Natural killer cell (primary cell): ENCODE measurements at regions of chr7 and their contacts with region 1.

Region 1: GRCh38 chr7:13262929-13263530 is 575.6 kb downstream of the ARL4A start:
- DNase-seq: peak in 1 of 2 donors; percentile 64
- ATAC-seq: no peak
- H3K4me3 ChIP-seq: no peak overlapping the region
- H3K4me3 Mint-ChIP-seq: no peak overlapping the region
- H3K27ac ChIP-seq: no peak overlapping the region
- H3K27ac Mint-ChIP-seq: no peak overlapping the region
- H3K4me1 ChIP-seq: no peaks in the 10 kb centered on the region
- H3K4me1 Mint-ChIP-seq: no peaks in the 10 kb centered on the region
- H3K27me3 ChIP-seq: no peaks in the 10 kb centered on the region
- H3K27me3 Mint-ChIP-seq: no peaks in the 10 kb centered on the region
- CTCF ChIP-seq: peak; percentile 32

Region 2: GRCh38 chr7:12524794-12525386 is 738.1 kb before region 1 on chr7:
- intact Hi-C with region 1: loop called (anchors 1 kb)
- DNase-seq: peak in 1 of 2 donors; percentile 60
- ATAC-seq: no peak
- H3K4me3 ChIP-seq: no peak overlapping the region
- H3K4me3 Mint-ChIP-seq: no peak overlapping the region
- H3K27ac ChIP-seq: no peak overlapping the region
- H3K27ac Mint-ChIP-seq: no peak overlapping the region
- H3K4me1 ChIP-seq: no peaks in the 10 kb centered on the region
- H3K4me1 Mint-ChIP-seq: no peaks in the 10 kb centered on the region
- H3K27me3 ChIP-seq: no peaks in the 10 kb centered on the region
- H3K27me3 Mint-ChIP-seq: no peaks in the 10 kb centered on the region
- CTCF ChIP-seq: peak; percentile 59

Region 3: DNA sequence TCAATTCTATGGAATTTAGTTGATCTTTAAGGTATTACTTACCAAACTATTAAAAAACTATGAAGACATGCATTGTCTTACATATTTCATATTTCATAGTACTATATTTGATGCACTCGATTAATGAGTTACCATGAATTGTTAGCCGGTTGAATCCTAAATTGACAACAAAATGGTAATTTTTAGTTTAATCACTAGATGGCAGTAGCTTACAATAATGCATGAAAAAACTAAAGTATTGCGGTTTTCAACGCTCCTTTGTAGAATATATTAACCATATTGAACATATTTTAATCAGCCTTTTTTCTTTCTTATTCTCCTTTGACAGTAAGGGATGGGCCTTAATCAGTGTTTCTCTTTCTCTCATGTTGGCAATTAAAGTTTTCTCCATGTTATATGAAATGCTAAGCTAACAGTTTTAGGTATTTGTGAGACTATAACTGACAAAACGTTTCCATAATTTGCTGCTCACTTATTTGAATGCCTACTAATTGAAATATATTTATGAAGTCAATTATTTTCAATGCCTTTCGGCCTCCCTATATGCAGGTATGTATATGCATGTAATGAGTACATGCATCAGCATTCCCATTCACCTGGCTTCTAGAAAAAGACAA is 624.1 kb before region 1 on chr7:
- intact Hi-C with region 1: loop called (anchors 1 kb)
- DNase-seq: peak in 1 of 2 donors; percentile 68
- ATAC-seq: peak; percentile 54 to 68 (median 67)
- H3K4me3 ChIP-seq: no peak overlapping the region
- H3K4me3 Mint-ChIP-seq: no peak overlapping the region
- H3K27ac ChIP-seq: no peak overlapping the region
- H3K27ac Mint-ChIP-seq: no peak overlapping the region
- H3K4me1 ChIP-seq: peaks cover under 1% of the 10 kb centered on the region
- H3K4me1 Mint-ChIP-seq: peaks cover 11 to 13% of the 10 kb centered on the region in 2 donors
- H3K27me3 ChIP-seq: no peaks in the 10 kb centered on the region
- H3K27me3 Mint-ChIP-seq: no peaks in the 10 kb centered on the region
- CTCF ChIP-seq: peak; percentile 91

Region 4: GRCh38 chr7:13352677-13353076 is 89.6 kb after region 1 on chr7:
- intact Hi-C with region 1: no loop called
- DNase-seq: no peak
- ATAC-seq: no peak
- H3K4me3 ChIP-seq: no peak overlapping the region
- H3K4me3 Mint-ChIP-seq: no peak overlapping the region
- H3K27ac ChIP-seq: no peak overlapping the region
- H3K27ac Mint-ChIP-seq: no peak overlapping the region
- H3K4me1 ChIP-seq: no peaks in the 10 kb centered on the region
- H3K4me1 Mint-ChIP-seq: no peaks in the 10 kb centered on the region
- H3K27me3 ChIP-seq: no peaks in the 10 kb centered on the region
- H3K27me3 Mint-ChIP-seq: no peaks in the 10 kb centered on the region
- CTCF ChIP-seq: no peak

Region 5: DNA sequence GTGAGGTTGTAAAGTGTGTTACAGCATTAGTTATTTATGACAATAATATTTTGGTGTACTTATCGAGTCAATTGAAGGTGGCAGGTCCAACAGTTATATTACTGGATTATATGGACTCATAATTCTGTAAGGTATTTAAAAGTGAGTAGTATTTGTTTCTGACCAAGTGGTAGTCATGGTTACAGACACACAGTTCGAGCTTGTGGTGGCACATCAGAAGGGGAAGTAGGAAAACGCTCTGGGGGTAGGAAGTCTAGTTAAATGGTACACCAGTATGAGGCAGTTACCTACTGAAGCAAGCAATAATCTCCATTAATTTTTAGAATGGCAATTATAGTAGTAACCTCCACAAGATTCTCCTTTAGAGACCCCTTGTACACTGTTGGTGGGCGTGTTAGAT is 185.2 kb after region 1 on chr7:
- intact Hi-C with region 1: no loop called
- DNase-seq: no peak
- ATAC-seq: no peak
- H3K4me3 ChIP-seq: no peak overlapping the region
- H3K4me3 Mint-ChIP-seq: no peak overlapping the region
- H3K27ac ChIP-seq: no peak overlapping the region
- H3K27ac Mint-ChIP-seq: no peak overlapping the region
- H3K4me1 ChIP-seq: no peaks in the 10 kb centered on the region
- H3K4me1 Mint-ChIP-seq: no peaks in the 10 kb centered on the region
- H3K27me3 ChIP-seq: no peaks in the 10 kb centered on the region
- H3K27me3 Mint-ChIP-seq: no peaks in the 10 kb centered on the region
- CTCF ChIP-seq: no peak